ENCODE measurements at regions of chr19 and their contacts with region 1.

Region 1: GRCh38 chr19:38929929-38930775 is at the start of gene SARS2:
- DNase-seq: peak; percentile 94
- ATAC-seq: peak; percentile 68
- H3K4me3 Mint-ChIP-seq: peak within 1 kb of the TSS; percentile 98
- H3K27ac Mint-ChIP-seq: peak within 1 kb of the TSS; percentile 99
- H3K4me1 Mint-ChIP-seq: peaks cover 31% of the 10 kb centered on the region
- H3K27me3 Mint-ChIP-seq: no peaks in the 10 kb centered on the region
- total RNA-seq, gene SARS2: 36.2 to 36.6 TPM

Region 2: DNA sequence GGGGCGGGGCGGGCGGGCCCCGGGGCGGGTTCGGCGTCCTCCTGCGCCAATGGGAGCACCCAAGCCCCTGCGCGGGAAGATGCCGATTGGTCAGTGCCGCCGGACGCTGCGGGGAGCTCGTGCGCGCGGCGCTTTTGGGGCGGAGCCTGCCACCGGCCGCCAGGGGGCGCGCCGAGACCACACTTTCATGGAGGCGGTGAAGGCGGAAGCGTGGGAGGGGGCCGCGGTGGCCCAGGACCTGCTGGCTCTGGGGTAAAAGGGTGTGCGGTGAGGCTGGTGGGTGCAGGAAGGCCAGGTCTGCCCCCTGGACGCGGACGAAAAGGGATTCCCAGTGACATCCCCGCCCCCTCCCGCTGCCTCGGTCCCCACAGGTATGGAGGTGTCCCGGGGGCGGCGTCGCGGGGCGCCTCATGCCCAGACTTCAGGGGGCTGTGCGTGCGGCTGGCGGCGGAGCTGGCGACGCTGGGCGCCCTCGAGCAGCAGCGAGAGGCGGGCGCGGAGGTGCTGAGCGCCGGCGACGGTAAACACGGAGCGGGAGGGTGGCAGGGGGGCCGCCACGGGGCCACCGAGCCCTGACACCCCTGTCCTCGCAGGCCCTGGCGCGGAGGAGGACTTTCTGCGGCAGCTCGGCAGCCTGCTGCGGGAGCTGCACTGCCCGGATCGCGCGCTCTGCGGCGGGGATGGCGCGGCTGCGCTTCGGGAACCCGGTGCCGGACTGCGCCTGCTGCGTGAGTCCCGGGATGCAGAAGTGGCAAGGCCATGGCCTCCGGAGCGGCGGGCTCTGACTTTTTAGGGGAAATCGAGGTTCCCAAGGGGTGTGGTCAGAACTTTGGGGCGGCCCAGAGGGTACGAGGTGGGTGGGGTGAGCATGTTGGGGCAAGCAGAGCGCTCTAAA is 526.9 kb before region 1 on chr19 and contains the start of gene FAM98C:
- CTCF ChIA-PET with region 1: interaction called, 25 read pairs
- POLR2A ChIA-PET with region 1: no interaction called
- DNase-seq: peak; percentile 96
- ATAC-seq: peak; percentile 99
- H3K4me3 Mint-ChIP-seq: peak within 1 kb of the TSS; percentile 84
- H3K27ac Mint-ChIP-seq: peak within 1 kb of the TSS; percentile 93
- H3K4me1 Mint-ChIP-seq: peaks cover 26% of the 10 kb centered on the region
- H3K27me3 Mint-ChIP-seq: peaks cover 5% of the 10 kb centered on the region
- total RNA-seq, gene FAM98C: 21.0 to 25.9 TPM

Region 3: GRCh38 chr19:38647368-38647965 is 282.7 kb before region 1 on chr19 and contains the start of gene ACTN4:
- CTCF ChIA-PET with region 1: interaction called, 10 read pairs
- POLR2A ChIA-PET with region 1: no interaction called
- DNase-seq: peak; percentile 100
- ATAC-seq: peak; percentile 92
- H3K4me3 Mint-ChIP-seq: peak within 1 kb of the TSS; percentile 95
- H3K27ac Mint-ChIP-seq: peak within 1 kb of the TSS; percentile 88
- H3K4me1 Mint-ChIP-seq: peaks cover 50% of the 10 kb centered on the region
- H3K27me3 Mint-ChIP-seq: no peaks in the 10 kb centered on the region
- total RNA-seq, gene ACTN4: 357 to 373 TPM

Region 4: GRCh38 chr19:38838573-38839269 is 91.4 kb before region 1 on chr19:
- CTCF ChIA-PET with region 1: interaction called, 12 read pairs
- POLR2A ChIA-PET with region 1: interaction called, 3 read pairs
- DNase-seq: peak; percentile 28
- ATAC-seq: no peak
- H3K4me3 Mint-ChIP-seq: no peak overlapping the region
- H3K27ac Mint-ChIP-seq: peak overlapping the region; percentile 55
- H3K4me1 Mint-ChIP-seq: peaks cover 55% of the 10 kb centered on the region
- H3K27me3 Mint-ChIP-seq: no peaks in the 10 kb centered on the region

Region 5: GRCh38 chr19:38869856-38870607 is 60.1 kb before region 1 on chr19:
- CTCF ChIA-PET with region 1: interaction called, 17 read pairs
- POLR2A ChIA-PET with region 1: no interaction called
- DNase-seq: peak; percentile 94
- ATAC-seq: peak; percentile 94
- H3K4me3 Mint-ChIP-seq: peak overlapping the region; percentile 79
- H3K27ac Mint-ChIP-seq: peak overlapping the region; percentile 86
- H3K4me1 Mint-ChIP-seq: peaks cover 54% of the 10 kb centered on the region
- H3K27me3 Mint-ChIP-seq: no peaks in the 10 kb centered on the region

Region 6: DNA sequence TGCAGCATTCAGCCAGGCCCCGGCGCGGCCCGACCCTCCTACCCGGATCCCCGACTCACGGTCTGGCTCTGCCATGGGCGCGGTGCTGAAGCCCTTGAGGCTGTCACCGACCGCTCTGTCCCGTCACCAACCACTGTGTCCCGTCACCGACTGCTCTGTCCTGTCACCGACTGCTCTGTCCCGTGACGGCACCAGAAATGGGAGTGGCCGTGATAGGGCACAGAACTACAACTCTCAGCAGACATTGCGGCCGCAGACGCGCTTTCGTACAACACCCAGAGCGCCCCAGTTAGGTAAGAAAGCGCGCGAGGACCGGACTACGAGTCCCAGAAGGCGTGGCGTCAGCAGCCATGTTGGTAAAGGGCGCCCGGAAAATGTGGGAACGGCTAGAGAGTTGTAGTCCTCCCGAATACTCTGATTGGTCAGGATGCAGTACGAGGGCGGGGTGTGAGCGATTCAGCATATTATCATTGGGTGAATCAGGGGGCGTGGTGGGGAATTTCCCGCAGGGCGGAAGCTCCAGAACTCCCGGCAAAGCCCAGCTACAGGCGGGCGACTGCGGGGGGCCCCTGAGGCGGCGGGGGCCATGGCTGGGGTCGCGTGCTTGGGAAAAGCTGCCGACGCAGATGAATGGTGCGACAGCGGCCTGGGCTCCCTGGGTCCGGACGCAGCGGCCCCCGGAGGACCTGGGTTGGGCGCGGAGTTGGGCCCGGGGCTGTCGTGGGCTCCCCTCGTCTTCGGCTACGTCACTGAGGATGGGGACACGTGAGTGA is 30.5 kb before region 1 on chr19 and contains the starts of genes NFKBIB and SIRT2:
- CTCF ChIA-PET with region 1: interaction called, 49 read pairs
- POLR2A ChIA-PET with region 1: interaction called, 4 read pairs
- DNase-seq: peak; percentile 100
- ATAC-seq: peak; percentile 93
- H3K4me3 Mint-ChIP-seq: peak within 1 kb of the TSS; percentile 91
- H3K27ac Mint-ChIP-seq: peak within 1 kb of the TSS; percentile 95
- H3K4me1 Mint-ChIP-seq: peaks cover 37% of the 10 kb centered on the region
- H3K27me3 Mint-ChIP-seq: no peaks in the 10 kb centered on the region
- total RNA-seq, gene NFKBIB: 31.9 to 36.6 TPM
- total RNA-seq, gene SIRT2: 36.4 to 40.3 TPM

Measured in activated CD8-positive, alpha-beta T cell treated with anti-CD3 and anti-CD28 coated beads, Interleukin-2, amount 10 ng/mL, durations not matched to agents 7 days and 5 days (primary cell).